ENCODE measurements at regions of chr19 and their contacts with region 1.

Region 1: GRCh38 chr19:21020298-21021227 is at the start of gene ZNF430:
- DNase-seq: peak; percentile 75 to 95 (median 93)
- ATAC-seq: peak; percentile 98
- H3K4me3 ChIP-seq: peak within 1 kb of the TSS; percentile 95
- H3K4me3 Mint-ChIP-seq: peak within 1 kb of the TSS; percentile 99 to 100 (median 100)
- H3K27ac ChIP-seq: peak within 1 kb of the TSS; percentile 97
- H3K27ac Mint-ChIP-seq: peak within 1 kb of the TSS; percentile 99 to 100 (median 100)
- H3K4me1 ChIP-seq: peaks cover 14 to 20% of the 10 kb centered on the region in 2 donors
- H3K4me1 Mint-ChIP-seq: peaks cover 32 to 56% (median 52%) of the 10 kb centered on the region in 7 donors
- H3K27me3 ChIP-seq: no peaks in the 10 kb centered on the region
- H3K27me3 Mint-ChIP-seq: no peaks in the 10 kb centered on the region
- total RNA-seq, gene ZNF430: 26.4 to 52.0 (median 42.2) TPM

Region 2: GRCh38 chr19:19098703-19099632 is 1921.6 kb before region 1 on chr19:
- CTCF ChIA-PET with region 1: no interaction called
- POLR2A ChIA-PET with region 1: no interaction called
- intact Hi-C with region 1: no loop called
- DNase-seq: no peak
- ATAC-seq: no peak
- H3K4me3 ChIP-seq: no peak overlapping the region
- H3K4me3 Mint-ChIP-seq: no peak overlapping the region
- H3K27ac ChIP-seq: no peak overlapping the region
- H3K27ac Mint-ChIP-seq: peak overlapping the region in 1 of 9 donors; percentile 29
- H3K4me1 ChIP-seq: no peaks in the 10 kb centered on the region
- H3K4me1 Mint-ChIP-seq: peaks cover 0 to 2% (median 0%) of the 10 kb centered on the region in 7 donors
- H3K27me3 ChIP-seq: no peaks in the 10 kb centered on the region
- H3K27me3 Mint-ChIP-seq: no peaks in the 10 kb centered on the region

Region 3: DNA sequence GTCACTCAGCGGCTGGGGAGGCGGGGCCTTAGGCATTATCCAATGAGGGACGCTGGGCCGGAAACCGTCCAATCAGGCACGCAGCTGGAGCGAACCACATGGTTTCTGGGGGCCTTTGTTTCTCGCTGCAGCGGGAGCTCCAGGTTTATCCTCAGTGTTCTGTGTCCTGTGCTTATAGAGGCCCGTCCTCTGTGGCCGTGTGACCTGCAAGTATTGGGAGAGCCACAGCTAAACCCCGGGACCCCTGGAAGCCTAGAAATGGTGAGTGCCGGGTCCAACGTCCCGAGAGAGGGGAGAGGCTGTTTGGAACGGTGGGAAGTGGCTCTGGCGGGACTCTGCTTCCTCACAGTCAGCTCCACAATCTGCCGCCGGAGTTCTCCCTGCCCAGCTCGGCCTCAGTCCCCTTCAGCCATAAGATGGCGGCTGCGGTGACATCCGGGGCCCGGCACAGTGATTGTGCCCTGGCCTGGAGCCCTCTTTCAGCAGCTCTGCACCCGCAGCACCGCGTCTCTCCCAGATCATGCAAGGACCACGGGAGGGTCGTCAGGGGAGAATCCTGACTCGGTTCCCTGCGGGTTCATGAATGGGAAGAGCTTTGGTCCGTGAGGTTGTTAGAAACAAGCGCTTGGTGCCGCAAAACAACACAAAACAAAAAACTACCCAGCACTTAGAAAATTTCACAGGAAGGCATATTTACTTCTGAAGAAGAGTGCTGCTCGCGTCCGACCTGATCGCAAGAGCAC is 1154.7 kb before region 1 on chr19 and contains the start of gene ZNF253:
- CTCF ChIA-PET with region 1: no interaction called
- POLR2A ChIA-PET with region 1: no interaction called
- intact Hi-C with region 1: loop called in 1 of 2 experiments (anchors 5 kb)
- DNase-seq: peak; percentile 76 to 95 (median 92)
- ATAC-seq: peak; percentile 95
- H3K4me3 ChIP-seq: peak within 1 kb of the TSS; percentile 93
- H3K4me3 Mint-ChIP-seq: peak within 1 kb of the TSS; percentile 98 to 100 (median 100)
- H3K27ac ChIP-seq: peak within 1 kb of the TSS; percentile 86
- H3K27ac Mint-ChIP-seq: peak within 1 kb of the TSS; percentile 96 to 100 (median 99)
- H3K4me1 ChIP-seq: peaks cover 7 to 13% of the 10 kb centered on the region in 2 donors
- H3K4me1 Mint-ChIP-seq: peaks cover 21 to 41% (median 31%) of the 10 kb centered on the region in 7 donors
- H3K27me3 ChIP-seq: no peaks in the 10 kb centered on the region
- H3K27me3 Mint-ChIP-seq: no peaks in the 10 kb centered on the region
- total RNA-seq, gene ZNF253: 9.5 to 33.8 (median 14.8) TPM

Region 4: DNA sequence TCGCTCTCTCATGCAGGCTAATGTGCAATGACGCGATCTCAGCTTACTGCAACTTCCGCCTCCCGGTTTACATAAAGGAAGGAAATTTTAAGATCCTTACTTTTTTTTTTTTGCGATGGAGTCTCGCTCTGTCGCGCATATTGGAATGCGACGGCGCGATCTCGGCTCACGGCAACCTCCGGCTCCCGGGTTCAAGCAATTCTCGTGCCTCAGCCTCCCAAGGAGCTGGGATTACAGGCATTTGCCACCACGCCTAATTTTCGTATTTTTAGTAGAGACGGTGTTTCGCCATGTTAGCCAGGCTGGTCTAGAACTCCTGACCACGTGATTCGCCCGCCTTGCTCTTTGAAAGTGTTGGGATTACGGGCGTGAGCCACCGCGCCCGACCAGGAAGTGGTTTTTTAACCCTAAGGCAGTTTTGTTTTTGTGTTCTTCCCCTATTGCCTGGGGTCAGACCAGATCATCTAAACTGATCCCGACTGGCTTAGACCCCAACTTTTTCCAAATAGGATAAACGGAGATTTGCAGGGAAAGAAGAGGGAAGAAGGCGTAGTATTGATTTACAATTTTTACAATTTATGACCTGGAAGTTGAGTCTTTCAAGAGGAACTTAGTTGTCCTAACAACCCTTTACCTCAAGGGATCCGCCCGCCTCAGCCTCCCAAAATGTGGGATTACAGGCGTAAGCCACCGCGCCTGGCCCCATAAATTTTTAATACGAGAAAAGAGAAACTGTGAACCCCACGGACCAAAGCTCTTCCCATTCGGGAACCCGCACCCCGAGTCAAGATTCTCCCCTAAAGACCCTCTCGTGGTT is 597.0 kb before region 1 on chr19:
- CTCF ChIA-PET with region 1: no interaction called
- POLR2A ChIA-PET with region 1: interaction called, 3 read pairs
- intact Hi-C with region 1: loop called in 1 of 2 experiments (anchors 1 kb)
- DNase-seq: peak in 7 of 9 donors; percentile 17 to 30 (median 24)
- ATAC-seq: no peak
- H3K4me3 ChIP-seq: peak overlapping the region; percentile 91
- H3K4me3 Mint-ChIP-seq: peak overlapping the region; percentile 89 to 98 (median 93)
- H3K27ac ChIP-seq: peak overlapping the region; percentile 72
- H3K27ac Mint-ChIP-seq: peak overlapping the region; percentile 51 to 96 (median 89)
- H3K4me1 ChIP-seq: peaks cover 0 to 3% of the 10 kb centered on the region in 2 donors
- H3K4me1 Mint-ChIP-seq: peaks cover 4 to 29% (median 16%) of the 10 kb centered on the region in 7 donors
- H3K27me3 ChIP-seq: no peaks in the 10 kb centered on the region
- H3K27me3 Mint-ChIP-seq: no peaks in the 10 kb centered on the region

Region 5: DNA sequence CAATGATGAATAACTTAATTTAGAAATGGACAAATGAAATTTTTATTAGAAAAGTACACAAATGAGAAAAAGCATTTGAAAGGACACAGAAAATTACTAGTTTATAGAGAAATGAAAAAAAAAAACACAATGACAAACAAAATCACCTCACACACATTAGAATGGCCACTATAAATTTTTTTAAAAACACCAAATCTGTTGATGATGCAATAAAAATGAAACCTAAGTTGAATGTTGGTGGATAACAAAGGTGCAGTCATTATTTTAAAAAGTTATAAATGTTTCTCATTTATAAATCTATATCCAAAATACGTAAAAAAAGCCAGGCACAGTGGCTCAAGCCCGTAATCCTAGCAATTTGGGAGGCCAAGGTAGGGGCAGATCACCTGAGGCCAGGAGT is 380.0 kb before region 1 on chr19:
- CTCF ChIA-PET with region 1: no interaction called
- POLR2A ChIA-PET with region 1: no interaction called
- intact Hi-C with region 1: no loop called
- DNase-seq: no peak
- ATAC-seq: no peak
- H3K4me3 ChIP-seq: no peak overlapping the region
- H3K4me3 Mint-ChIP-seq: no peak overlapping the region
- H3K27ac ChIP-seq: no peak overlapping the region
- H3K27ac Mint-ChIP-seq: no peak overlapping the region
- H3K4me1 ChIP-seq: no peaks in the 10 kb centered on the region
- H3K4me1 Mint-ChIP-seq: no peaks in the 10 kb centered on the region
- H3K27me3 ChIP-seq: no peaks in the 10 kb centered on the region
- H3K27me3 Mint-ChIP-seq: no peaks in the 10 kb centered on the region

Region 6: DNA sequence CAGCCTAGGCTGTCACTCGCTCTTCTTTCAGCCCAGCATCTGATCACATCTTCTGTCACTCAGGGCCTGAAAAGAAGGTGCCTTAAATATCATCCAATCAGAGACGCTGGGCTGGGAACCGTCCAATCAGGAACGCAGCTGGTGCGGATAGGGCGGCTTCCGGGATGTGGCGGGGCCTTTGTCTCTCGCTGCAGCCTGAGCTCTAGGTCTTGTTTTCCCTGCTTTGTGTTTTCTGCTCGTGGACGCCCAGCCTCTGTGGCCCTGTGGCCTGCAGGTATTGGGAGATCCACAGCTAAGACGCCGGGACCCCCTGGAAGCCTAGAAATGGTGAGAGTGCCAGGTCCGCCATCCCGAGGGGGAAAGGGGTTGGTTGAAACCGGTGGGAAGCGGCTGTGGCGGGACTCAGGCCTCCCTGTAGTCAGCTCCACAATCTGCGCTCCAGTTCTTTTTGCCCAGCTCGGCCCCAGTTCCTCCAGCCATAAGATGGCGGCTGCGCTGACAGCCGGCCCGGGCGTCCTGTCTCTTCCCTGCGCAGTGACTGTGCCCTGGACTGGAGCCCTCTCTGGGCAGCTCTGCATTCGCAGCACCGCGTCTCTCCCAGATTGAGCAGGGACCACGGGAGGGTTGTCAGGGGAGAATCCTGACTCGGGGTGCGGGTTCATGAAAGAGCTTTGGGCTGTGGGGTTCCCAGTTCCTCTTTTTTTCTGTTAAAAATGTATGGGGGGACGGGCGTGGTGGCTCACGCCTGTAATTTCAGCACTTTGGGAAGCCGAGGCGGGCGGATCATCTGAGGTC is 97.3 kb before region 1 on chr19 and contains the start of gene ZNF85:
- CTCF ChIA-PET with region 1: no interaction called
- POLR2A ChIA-PET with region 1: interaction called, 16 read pairs
- intact Hi-C with region 1: loop called (anchors 1 to 2 kb)
- DNase-seq: peak; percentile 69 to 95 (median 92)
- ATAC-seq: peak; percentile 99
- H3K4me3 ChIP-seq: peak within 1 kb of the TSS; percentile 66
- H3K4me3 Mint-ChIP-seq: peak within 1 kb of the TSS; percentile 92 to 98 (median 95)
- H3K27ac ChIP-seq: peak within 1 kb of the TSS; percentile 63
- H3K27ac Mint-ChIP-seq: peak within 1 kb of the TSS; percentile 87 to 98 (median 93)
- H3K4me1 ChIP-seq: peaks cover 0 to 4% of the 10 kb centered on the region in 2 donors
- H3K4me1 Mint-ChIP-seq: peaks cover 4 to 28% (median 14%) of the 10 kb centered on the region in 7 donors
- H3K27me3 ChIP-seq: no peaks in the 10 kb centered on the region
- H3K27me3 Mint-ChIP-seq: no peaks in the 10 kb centered on the region
- total RNA-seq, gene ZNF85: 4.3 to 10.4 (median 7.3) TPM

Region 7: GRCh38 chr19:21328885-21329605 is 308.5 kb after region 1 on chr19 and contains the start of gene ZNF708:
- CTCF ChIA-PET with region 1: no interaction called
- POLR2A ChIA-PET with region 1: interaction called, 14 read pairs
- intact Hi-C with region 1: loop called in 1 of 2 experiments (anchors 10 kb)
- DNase-seq: peak; percentile 42 to 80 (median 71)
- ATAC-seq: peak; percentile 99
- H3K4me3 ChIP-seq: peak within 1 kb of the TSS; percentile 94
- H3K4me3 Mint-ChIP-seq: peak within 1 kb of the TSS; percentile 93 to 99 (median 97)
- H3K27ac ChIP-seq: peak within 1 kb of the TSS; percentile 92
- H3K27ac Mint-ChIP-seq: peak within 1 kb of the TSS; percentile 96 to 100 (median 99)
- H3K4me1 ChIP-seq: peaks cover 6 to 14% of the 10 kb centered on the region in 2 donors
- H3K4me1 Mint-ChIP-seq: peaks cover 24 to 47% (median 31%) of the 10 kb centered on the region in 7 donors
- H3K27me3 ChIP-seq: no peaks in the 10 kb centered on the region
- H3K27me3 Mint-ChIP-seq: no peaks in the 10 kb centered on the region
- total RNA-seq, gene ZNF708: 21.2 to 48.0 (median 24.2) TPM

Region 8: GRCh38 chr19:21851596-21852345 is 831.2 kb after region 1 on chr19:
- CTCF ChIA-PET with region 1: no interaction called
- POLR2A ChIA-PET with region 1: interaction called, 3 read pairs
- intact Hi-C with region 1: loop called in 1 of 2 experiments (anchors 1 kb)
- DNase-seq: peak; percentile 71 to 90 (median 88)
- ATAC-seq: peak; percentile 99
- H3K4me3 ChIP-seq: peak overlapping the region; percentile 98
- H3K4me3 Mint-ChIP-seq: peak overlapping the region; percentile 89 to 96 (median 92)
- H3K27ac ChIP-seq: peak overlapping the region; percentile 90
- H3K27ac Mint-ChIP-seq: peak overlapping the region; percentile 68 to 96 (median 92)
- H3K4me1 ChIP-seq: peaks cover 6 to 10% of the 10 kb centered on the region in 2 donors
- H3K4me1 Mint-ChIP-seq: peaks cover 8 to 34% (median 27%) of the 10 kb centered on the region in 7 donors
- H3K27me3 ChIP-seq: no peaks in the 10 kb centered on the region
- H3K27me3 Mint-ChIP-seq: peaks cover 0 to 1% (median 0%) of the 10 kb centered on the region in 5 donors

Measured in naive thymus-derived CD4-positive, alpha-beta T cell (primary cell).